SK-N-SH (cell line): ENCODE measurements at regions of chr2 and their contacts with region 1.

Region 1: DNA sequence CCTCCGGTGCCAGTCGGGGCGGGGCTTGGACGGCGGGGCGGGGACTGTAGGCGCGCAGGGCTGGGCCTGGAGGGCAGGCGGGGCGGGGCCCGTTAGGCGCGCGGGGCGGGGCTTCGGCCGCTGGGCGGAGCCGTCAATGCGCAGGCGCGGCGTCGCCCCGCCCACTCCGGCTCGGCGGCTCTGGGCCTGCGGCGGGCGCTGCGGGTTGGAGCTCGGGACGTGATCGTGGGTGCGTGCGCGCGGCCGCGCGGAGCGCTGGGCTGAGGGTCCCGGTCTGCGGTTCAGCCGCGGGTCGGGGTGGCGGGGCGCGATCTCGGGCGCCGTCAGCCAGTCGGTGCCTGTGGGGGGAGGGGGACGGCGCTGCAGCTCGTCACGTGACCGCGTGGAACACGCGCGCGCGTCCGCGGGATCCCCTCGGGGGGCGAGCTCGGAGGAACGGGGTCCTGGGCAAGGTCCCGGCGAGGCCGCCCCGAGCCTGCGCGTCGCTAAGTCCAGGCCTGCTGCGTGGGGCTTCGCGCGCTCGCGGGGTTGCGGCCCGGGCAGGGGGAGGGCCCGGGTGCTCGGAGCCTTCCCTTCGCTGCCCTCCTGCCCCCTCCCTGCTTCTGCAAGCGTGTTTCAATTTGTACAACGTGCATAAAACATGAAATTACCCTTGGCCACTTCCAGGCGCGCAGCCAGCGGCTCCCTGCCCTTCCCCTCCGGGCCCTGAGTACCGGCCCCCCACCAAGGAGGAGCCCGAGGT is at the start of gene D2HGDH:
- DNase-seq: peak; percentile 99
- H3K4me3 ChIP-seq: peak within 1 kb of the TSS; percentile 75 to 85
- H3K27ac ChIP-seq: peak within 1 kb of the TSS; percentile 71 to 88
- H3K4me1 ChIP-seq: no peaks in the 10 kb centered on the region; a peak in 1 of 4 replicates
- H3K27me3 ChIP-seq: no peaks in the 10 kb centered on the region
- CTCF ChIP-seq: no peak
- EP300 ChIP-seq: no peak
- RAD21 ChIP-seq: no peak
- polyA plus RNA-seq, gene D2HGDH: 33.7 and 36.3 TPM in 2 replicates

Region 2: DNA sequence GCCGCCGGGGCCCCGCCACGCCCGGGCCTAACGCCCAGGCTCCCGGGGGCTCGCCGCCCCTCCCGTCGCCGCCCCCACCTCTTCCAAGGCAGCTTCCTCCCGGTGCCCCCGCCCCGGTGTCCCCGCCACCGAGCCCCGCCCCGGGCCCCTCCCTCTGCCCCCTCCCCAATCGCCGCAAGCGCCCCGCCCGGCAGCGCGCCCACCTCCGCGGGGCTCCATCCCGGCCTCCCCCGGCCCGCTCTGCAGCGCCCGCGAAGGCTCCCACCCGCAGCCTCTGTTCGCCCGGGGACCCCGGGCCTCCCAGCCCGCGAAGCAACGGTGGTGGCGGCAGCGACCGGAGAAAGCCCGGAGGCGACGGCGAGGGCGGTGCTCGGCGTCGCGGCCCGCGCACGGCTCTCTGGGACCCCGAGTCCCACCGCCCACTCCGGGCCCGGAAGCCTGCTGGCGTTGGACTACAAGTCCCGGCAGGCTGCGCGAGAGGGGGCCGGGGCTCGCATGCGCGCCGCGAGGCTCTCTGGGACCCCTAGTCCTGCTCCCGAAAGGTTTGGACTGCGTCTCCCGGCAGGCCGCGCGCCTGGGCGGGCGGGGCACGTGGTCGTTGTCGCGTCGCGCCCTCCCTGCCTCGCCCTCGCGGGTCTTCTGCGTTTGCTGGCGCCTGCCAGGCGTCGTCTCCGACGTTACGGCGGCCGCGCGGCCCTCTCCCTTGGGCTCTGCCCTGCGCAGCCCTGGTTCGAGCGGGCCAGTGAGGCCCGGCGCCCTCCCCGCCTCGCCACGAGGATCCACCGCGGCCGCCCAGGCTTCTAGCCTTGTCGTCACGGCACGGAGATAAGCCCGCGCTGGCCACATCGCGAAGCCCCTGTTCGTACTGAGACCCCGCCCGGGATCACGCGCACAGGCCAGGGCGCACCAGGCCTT is 226.1 kb before region 1 on chr2 and contains the start of gene STK25:
- CTCF ChIA-PET with region 1: no interaction called
- POLR2A ChIA-PET with region 1: no interaction called
- DNase-seq: peak; percentile 99
- H3K4me3 ChIP-seq: peak within 1 kb of the TSS; percentile 83 to 94
- H3K27ac ChIP-seq: peak within 1 kb of the TSS; percentile 49 to 86
- H3K4me1 ChIP-seq: peaks cover 7 to 32% of the 10 kb centered on the region in 2 experiments; a peak in 2 of 4 replicates
- H3K27me3 ChIP-seq: no peaks in the 10 kb centered on the region
- CTCF ChIP-seq: no peak; the same call in 1 of the 2 replicates
- EP300 ChIP-seq: no peak
- RAD21 ChIP-seq: no peak
- polyA plus RNA-seq, gene STK25: 236 and 268 TPM in 2 replicates

Region 3: DNA sequence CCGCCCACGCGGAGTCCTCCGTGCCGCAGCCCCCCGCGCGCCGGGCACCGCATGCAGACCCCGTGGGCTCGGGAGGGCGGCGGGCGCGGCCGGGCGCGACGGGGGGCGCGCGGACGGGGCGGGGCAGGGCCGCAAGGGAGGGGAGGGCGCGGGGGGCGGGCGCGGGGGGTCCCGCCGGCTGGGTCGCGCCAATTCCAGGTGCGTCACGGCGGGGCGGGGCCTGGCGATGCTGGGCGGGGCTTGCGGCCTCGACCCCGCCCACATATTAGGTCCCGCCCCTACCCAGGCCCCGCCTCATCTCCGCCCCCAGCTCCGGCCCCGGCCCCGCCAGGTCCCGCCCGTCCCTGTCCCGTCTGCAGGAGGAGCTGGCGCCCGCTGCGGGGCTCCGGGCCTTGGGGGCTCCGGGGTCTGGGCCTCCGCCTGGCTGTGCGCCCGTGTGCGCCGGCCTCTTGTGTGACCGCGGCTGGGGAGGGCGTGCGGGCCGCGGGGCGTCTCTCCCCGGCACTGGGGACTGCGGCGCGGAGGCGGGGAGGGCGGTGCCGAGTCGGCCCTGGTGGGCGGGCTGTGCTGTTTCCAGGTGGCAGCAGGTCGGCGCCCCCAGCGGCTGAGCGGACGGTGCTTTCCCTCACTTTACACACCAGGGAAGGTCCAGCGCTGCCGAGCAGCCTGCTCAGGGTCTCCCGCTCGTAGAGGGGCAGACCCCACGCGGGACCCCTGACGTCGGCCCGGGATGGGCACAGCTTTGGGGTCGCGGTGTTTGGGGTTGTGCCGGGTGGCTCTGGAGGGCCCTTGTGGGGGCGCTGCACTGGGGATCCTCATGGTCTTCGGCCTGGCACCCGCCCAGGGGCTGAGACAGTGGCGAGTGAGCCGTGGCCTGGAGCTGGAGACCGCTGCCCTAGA is 32.3 kb before region 1 on chr2:
- CTCF ChIA-PET with region 1: interaction called, 34 read pairs
- POLR2A ChIA-PET with region 1: interaction called, 14 read pairs
- DNase-seq: peak; percentile 96
- H3K4me3 ChIP-seq: peak overlapping the region; percentile 63 to 88
- H3K27ac ChIP-seq: peak overlapping the region; percentile 78 to 86; a peak in 3 of 4 replicates
- H3K4me1 ChIP-seq: peaks cover 0 to 11% of the 10 kb centered on the region in 2 experiments; a peak in 1 of 4 replicates
- H3K27me3 ChIP-seq: no peaks in the 10 kb centered on the region
- CTCF ChIP-seq: peak; percentile 60
- EP300 ChIP-seq: no peak
- RAD21 ChIP-seq: no peak

Region 4: DNA sequence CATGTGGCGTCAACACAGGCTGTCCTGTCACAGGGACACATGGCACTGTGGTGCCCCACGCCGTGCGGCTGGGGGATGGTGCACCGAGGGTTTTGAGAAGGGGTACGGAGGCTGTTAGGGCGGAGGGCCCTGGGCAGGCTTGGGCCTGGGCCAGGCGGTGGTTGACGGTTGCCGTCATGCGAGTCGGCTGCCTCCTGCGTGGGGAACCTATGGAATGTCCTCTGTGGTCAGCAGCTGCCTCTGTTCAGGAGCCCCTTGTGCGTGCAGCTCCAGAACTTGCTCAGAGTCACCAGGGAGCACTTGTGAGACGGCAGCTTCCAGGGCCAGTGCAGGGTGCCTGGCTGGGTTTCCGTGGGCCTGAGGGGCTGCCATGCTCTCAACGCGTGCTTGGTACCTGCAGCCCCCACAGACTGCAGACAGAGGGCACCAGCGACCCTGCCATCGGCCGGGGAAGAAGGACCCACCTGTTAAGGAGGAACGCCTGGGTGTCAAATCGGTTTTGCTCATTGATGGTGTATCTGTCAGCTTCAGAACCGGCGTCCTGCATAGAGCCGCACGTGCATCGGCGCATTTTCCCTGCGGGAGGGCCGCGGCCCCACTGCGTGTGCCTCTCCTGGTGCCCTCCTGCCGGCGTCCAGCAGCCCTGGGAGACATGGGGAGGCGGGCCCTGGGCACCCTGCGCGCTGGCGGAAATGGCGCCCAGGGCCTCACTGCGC is 10.2 kb before region 1 on chr2:
- CTCF ChIA-PET with region 1: interaction called, 10 read pairs
- POLR2A ChIA-PET with region 1: no interaction called
- DNase-seq: peak; percentile 66
- H3K4me3 ChIP-seq: no peak overlapping the region
- H3K27ac ChIP-seq: no peak overlapping the region
- H3K4me1 ChIP-seq: peaks cover 0 to 2% of the 10 kb centered on the region in 2 experiments; a peak in 1 of 4 replicates
- H3K27me3 ChIP-seq: no peaks in the 10 kb centered on the region
- CTCF ChIP-seq: no peak; the same call in 1 of the 2 replicates
- EP300 ChIP-seq: no peak
- RAD21 ChIP-seq: peak; percentile 53

Region 5: DNA sequence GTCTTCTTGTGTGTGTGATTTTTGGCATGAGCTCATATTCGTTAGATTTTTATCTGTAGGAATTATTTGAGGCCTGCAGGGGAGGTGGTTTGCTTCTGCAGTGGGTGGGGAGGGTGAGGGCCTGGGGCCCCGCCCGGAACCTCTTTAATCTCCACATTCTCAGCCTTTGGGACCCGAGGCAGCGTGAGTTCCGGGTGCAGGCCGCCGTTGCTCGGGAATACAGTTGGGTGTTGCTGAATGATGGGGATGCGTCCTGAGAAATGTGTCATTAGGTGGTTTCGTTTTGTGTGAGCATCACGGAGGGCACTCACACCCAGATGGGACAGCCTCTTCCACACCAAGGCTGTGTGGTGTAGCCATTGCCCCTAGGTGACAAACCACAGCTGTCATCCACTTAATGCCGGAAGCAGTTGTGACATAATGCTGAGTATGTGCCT is 28.3 kb after region 1 on chr2:
- CTCF ChIA-PET with region 1: interaction called, 12 read pairs
- POLR2A ChIA-PET with region 1: no interaction called
- DNase-seq: peak; percentile 45
- H3K4me3 ChIP-seq: no peak overlapping the region
- H3K27ac ChIP-seq: peak overlapping the region in 1 of 2 experiments; percentile 53; a peak in 2 of 4 replicates
- H3K4me1 ChIP-seq: peaks cover 0 to 32% of the 10 kb centered on the region in 2 experiments; a peak in 1 of 4 replicates
- H3K27me3 ChIP-seq: no peaks in the 10 kb centered on the region
- CTCF ChIP-seq: no peak
- EP300 ChIP-seq: no peak
- RAD21 ChIP-seq: no peak

Region 6: DNA sequence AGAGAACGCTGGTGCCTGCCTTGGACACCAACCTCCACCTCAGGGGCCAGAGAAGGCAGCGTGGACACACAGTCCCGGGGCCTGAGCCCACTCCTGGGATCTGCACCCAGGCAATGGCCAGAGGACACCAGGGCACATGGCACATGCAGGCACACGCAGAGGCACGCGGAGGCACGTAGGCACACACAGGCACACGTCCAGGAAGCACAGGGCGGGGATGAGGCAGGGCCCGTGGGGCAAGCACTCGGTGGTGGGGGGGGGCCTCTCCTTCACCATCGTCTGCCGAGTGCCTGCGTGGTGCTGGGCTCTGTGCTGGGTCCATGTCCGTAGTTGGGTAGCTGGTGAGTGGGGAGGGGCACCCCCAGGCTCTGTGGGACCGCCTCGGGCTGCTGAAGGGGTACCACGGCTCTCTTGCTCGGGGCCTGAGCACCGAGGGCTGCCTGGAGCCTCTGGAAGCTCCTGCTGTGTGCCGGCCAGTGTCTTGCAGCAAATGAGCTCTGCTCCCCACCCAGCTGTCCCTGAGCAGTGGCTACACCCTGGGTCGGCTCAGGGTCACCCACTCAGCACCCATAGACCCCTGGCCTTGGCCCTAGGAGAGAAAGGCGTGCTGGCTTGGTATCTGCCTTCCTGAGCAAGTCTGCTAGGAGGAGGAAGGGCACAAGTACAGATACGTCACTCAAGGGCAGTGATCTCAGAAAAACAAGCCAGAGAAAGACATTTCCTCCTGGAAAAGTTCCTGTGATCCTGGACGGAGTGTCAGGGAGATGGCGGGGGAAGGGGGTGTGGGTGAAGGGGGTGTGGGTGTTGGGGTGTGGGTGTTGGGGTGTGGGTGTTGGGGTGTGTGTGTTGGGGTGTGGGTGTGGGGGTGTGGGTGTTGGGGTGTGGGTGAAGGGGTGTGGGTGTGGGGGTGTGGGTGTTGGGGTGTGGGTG is 161.3 kb after region 1 on chr2:
- CTCF ChIA-PET with region 1: no interaction called
- POLR2A ChIA-PET with region 1: no interaction called
- DNase-seq: peak; percentile 44
- H3K4me3 ChIP-seq: no peak overlapping the region
- H3K27ac ChIP-seq: no peak overlapping the region
- H3K4me1 ChIP-seq: peaks cover 0 to 39% of the 10 kb centered on the region in 2 experiments; a peak in 1 of 4 replicates
- H3K27me3 ChIP-seq: no peaks in the 10 kb centered on the region
- CTCF ChIP-seq: no peak
- EP300 ChIP-seq: no peak
- RAD21 ChIP-seq: no peak